ENCODE measurements at regions of chr1 and their contacts with region 1.

Region 1: GRCh38 chr1:65195495-65196417 is 47.8 kb downstream of the AK4 start:
- DNase-seq: no peak
- H3K4me3 ChIP-seq: no peak overlapping the region
- H3K27ac ChIP-seq: peak overlapping the region; percentile 75 to 78
- H3K4me1 ChIP-seq: peaks cover 0 to 35% (median 10%) of the 10 kb centered on the region in 4 donors
- H3K27me3 ChIP-seq: no peaks in the 10 kb centered on the region
- CTCF ChIP-seq: no peak

Region 2: DNA sequence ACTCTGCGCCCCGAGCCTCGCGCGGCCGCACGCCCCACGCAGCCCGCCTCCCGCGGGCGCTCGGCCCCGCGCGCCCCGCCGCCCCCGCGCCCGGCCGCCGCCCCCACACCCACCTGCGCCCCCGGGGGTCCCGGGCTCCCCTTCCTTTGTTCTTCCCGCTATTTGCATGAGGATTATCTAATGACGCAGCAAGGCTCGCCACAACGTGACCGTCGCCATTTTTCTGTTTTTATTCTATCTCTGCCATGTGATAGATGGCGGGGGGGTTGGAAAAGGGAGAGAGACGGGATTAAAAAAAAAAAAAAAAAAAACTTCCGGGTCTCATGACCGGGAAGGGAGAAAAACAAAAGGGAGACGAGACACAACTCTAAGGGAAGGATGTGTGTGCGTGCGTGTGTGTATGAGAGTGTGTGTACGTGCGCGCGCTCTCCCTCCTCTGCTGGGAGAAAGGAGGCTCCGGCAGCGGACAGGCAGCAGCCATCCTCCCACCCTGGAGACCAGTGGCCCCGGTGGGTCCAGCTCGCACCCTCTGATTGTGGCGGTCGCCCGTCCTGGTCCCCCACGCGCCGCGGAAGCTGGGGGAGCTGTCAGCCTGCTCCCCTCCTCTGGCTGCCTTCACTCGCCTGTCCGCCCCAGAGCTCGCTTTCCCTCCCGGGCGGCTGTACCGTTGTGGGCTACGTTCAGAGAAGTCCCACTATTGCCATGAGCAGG is 128.1 kb before region 1 on chr1:
- intact Hi-C with region 1: loop called (anchors 5 kb)
- DNase-seq: peak; percentile 85 to 88
- H3K4me3 ChIP-seq: peak overlapping the region; percentile 73 to 88
- H3K27ac ChIP-seq: peak overlapping the region; percentile 98 to 100
- H3K4me1 ChIP-seq: peaks cover 0 to 36% (median 25%) of the 10 kb centered on the region in 4 donors
- H3K27me3 ChIP-seq: no peaks in the 10 kb centered on the region
- CTCF ChIP-seq: no peak

Measured in tibial artery (tissue), 4 donors.